ENCODE measurements at regions of chr14 and their contacts with region 1.

Region 1: GRCh38 chr14:67883717-67884116 is 64.1 kb downstream of the RAD51B start:
- DNase-seq: no peak
- H3K4me3 ChIP-seq: no peak overlapping the region
- CTCF ChIP-seq: no peak

Region 2: DNA sequence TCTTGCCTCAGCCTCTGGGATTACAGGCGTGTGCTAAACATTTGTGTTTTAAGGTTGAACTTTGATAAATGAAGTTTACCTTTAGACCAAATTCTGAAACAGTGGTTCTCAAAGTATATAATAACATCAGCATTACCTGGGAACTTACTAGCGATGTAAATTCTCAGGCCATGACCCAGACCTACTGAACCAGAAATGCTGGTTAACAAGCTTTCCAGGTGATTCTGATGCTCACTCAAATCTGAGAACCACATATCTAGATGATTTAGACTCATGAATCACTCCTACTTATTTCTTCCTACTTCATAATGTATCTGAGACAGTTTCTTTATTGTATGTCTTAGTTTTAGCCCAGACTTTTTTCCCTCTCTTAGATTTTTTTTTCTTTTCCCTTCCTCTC is 20.5 kb before region 1 on chr14:
- CTCF ChIA-PET with region 1: interaction called, 10 read pairs
- POLR2A ChIA-PET with region 1: no interaction called
- DNase-seq: no peak
- H3K4me3 ChIP-seq: no peak overlapping the region
- CTCF ChIP-seq: no peak

Measured in AG04449 (cell line).